ENCODE measurements at regions of chr6 and their contacts with region 1.

Region 1: GRCh38 chr6:20126789-20127653 is 85.2 kb downstream of the MBOAT1 start:
- DNase-seq: peak; percentile 49 to 86 (median 73)
- ATAC-seq: peak; percentile 83 to 94 (median 93)
- H3K4me3 ChIP-seq: no peak overlapping the region
- H3K27ac ChIP-seq: peak overlapping the region in 8 of 12 donors; percentile 2 to 74 (median 25)
- H3K4me1 ChIP-seq: peaks cover 0 to 22% (median 10%) of the 10 kb centered on the region in 12 donors
- H3K27me3 ChIP-seq: no peaks in the 10 kb centered on the region
- CTCF ChIP-seq: peak; percentile 90 to 96 (median 93)
- POLR2A ChIP-seq: no peak

Region 2: GRCh38 chr6:20056350-20056992 is 70.5 kb before region 1 on chr6:
- intact Hi-C with region 1: no loop called
- DNase-seq: no peak
- ATAC-seq: peak in 2 of 4 donors; percentile 24 to 51
- H3K4me3 ChIP-seq: no peak overlapping the region
- H3K27ac ChIP-seq: no peak overlapping the region
- H3K4me1 ChIP-seq: no peaks in the 10 kb centered on the region
- H3K27me3 ChIP-seq: no peaks in the 10 kb centered on the region
- CTCF ChIP-seq: peak; percentile 21 to 67 (median 44)
- POLR2A ChIP-seq: no peak

Region 3: GRCh38 chr6:20092071-20092566 is 34.9 kb before region 1 on chr6:
- intact Hi-C with region 1: loop called in 8 of 10 experiments (anchors 1 to 5 kb)
- DNase-seq: no peak
- ATAC-seq: no peak
- H3K4me3 ChIP-seq: no peak overlapping the region
- H3K27ac ChIP-seq: no peak overlapping the region
- H3K4me1 ChIP-seq: no peaks in the 10 kb centered on the region
- H3K27me3 ChIP-seq: no peaks in the 10 kb centered on the region
- CTCF ChIP-seq: peak; percentile 65 to 82 (median 71)
- POLR2A ChIP-seq: no peak

Region 4: GRCh38 chr6:20205722-20206161 is 78.7 kb after region 1 on chr6:
- intact Hi-C with region 1: loop called in 7 of 10 experiments (anchors 5 to 10 kb)
- DNase-seq: no peak
- ATAC-seq: peak in 3 of 4 donors; percentile 7 to 43 (median 19)
- H3K4me3 ChIP-seq: peak overlapping the region in 1 of 12 donors; percentile 31
- H3K27ac ChIP-seq: peak overlapping the region in 2 of 12 donors; percentile 28 to 76
- H3K4me1 ChIP-seq: peaks cover 0 to 98% (median 27%) of the 10 kb centered on the region in 12 donors
- H3K27me3 ChIP-seq: no peaks in the 10 kb centered on the region
- CTCF ChIP-seq: no peak
- POLR2A ChIP-seq: no peak

Region 5: GRCh38 chr6:20212392-20213217 is 85.6 kb after region 1 on chr6 and contains the start of gene MBOAT1:
- intact Hi-C with region 1: loop called in 9 of 10 experiments (anchors 1 to 10 kb)
- DNase-seq: peak; percentile 93 to 97 (median 96)
- ATAC-seq: peak; percentile 97 to 99 (median 98)
- H3K4me3 ChIP-seq: peak within 1 kb of the TSS; percentile 42 to 97 (median 82)
- H3K27ac ChIP-seq: peak within 1 kb of the TSS; percentile 82 to 96 (median 89)
- H3K4me1 ChIP-seq: peaks cover 5 to 62% (median 23%) of the 10 kb centered on the region in 12 donors
- H3K27me3 ChIP-seq: no peaks in the 10 kb centered on the region
- CTCF ChIP-seq: peak in 5 of 12 donors; percentile 28 to 48 (median 31)
- POLR2A ChIP-seq: peak in 1 of 2 donors; percentile 79
- total RNA-seq, gene MBOAT1: 2.6 to 14.4 (median 4.3) TPM

Measured in heart left ventricle (tissue), 16 donors.